IMR-90 (cell line): ENCODE measurements at regions of chr2 and their contacts with region 1.

Region 1: DNA sequence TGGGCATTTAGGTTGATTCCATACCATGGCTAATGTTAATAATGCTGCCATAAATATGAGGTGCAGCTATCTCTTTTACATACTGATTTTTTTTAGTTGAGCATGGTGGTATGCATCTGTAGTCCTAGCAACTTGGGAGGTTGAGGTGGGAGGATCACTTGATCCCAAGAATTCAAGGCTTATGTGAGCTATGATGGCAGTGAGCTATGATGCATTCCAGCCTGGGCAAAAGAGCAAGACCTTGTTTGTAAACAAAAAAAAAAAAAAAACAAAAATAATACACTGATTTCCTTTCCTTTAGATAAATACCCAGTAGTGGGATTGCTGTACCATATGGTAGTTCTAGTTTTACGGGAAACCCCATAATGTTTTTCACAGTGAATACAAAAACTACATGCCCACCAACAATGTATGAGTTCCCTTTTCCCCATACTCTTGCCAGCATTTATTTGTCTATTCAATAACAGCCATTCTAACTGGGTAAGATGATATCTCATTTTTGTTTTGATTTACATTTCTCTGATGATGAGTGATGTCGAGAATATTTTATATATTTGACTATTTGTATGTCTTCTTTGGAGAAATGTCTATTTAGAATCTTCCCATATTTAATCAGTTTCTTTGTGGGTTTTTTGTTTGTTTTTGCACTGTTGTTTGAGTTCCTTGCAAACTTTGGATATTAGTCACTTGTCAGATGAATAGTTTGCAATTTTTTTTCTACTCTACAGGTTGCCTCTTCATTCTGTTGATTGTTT is 281.0 kb upstream of the KYNU start:
- DNase-seq: peak; percentile 31
- ATAC-seq: peak; percentile 62
- H3K4me3 ChIP-seq: no peak overlapping the region
- H3K27ac ChIP-seq: no peak overlapping the region
- H3K4me1 ChIP-seq: peaks cover 2% of the 10 kb centered on the region; the same call in 1 of the 2 replicates
- H3K27me3 ChIP-seq: no peaks in the 10 kb centered on the region
- CTCF ChIP-seq: no peak
- POLR2A ChIP-seq: no peak
- RAD21 ChIP-seq: no peak

Region 2: DNA sequence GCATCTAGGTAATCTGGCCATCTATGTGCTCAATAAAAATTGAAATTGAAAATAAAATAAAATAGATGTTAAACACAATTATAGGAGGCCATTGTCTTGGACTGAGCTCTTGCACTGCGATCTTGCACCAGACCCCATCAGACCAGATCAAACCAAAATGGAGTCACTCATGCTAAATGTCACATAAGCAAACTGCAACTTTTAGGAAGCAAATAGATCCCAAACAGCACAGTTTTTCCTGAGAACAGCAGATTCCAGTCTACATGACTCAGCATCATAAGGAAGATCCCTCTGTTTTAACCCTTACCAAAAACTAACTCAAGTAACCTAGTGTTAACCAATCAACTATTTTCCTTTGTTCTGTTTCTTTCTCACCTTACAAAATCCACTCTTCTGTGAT is 407.9 kb before region 1 on chr2:
- CTCF ChIA-PET with region 1: no interaction called
- POLR2A ChIA-PET with region 1: no interaction called
- dilution Hi-C with region 1: no loop called
- in situ Hi-C with region 1: no loop called
- intact Hi-C with region 1: loop called (anchors 2 kb)
- DNase-seq: peak; percentile 22
- ATAC-seq: no peak
- H3K4me3 ChIP-seq: no peak overlapping the region
- H3K27ac ChIP-seq: no peak overlapping the region
- H3K4me1 ChIP-seq: peaks cover 6% of the 10 kb centered on the region; the same call in 1 of the 2 replicates
- H3K27me3 ChIP-seq: no peaks in the 10 kb centered on the region
- CTCF ChIP-seq: no peak
- POLR2A ChIP-seq: no peak
- RAD21 ChIP-seq: no peak